T-cell (primary cell): ENCODE measurements at regions of chr14 and their contacts with region 1.

Region 1: DNA sequence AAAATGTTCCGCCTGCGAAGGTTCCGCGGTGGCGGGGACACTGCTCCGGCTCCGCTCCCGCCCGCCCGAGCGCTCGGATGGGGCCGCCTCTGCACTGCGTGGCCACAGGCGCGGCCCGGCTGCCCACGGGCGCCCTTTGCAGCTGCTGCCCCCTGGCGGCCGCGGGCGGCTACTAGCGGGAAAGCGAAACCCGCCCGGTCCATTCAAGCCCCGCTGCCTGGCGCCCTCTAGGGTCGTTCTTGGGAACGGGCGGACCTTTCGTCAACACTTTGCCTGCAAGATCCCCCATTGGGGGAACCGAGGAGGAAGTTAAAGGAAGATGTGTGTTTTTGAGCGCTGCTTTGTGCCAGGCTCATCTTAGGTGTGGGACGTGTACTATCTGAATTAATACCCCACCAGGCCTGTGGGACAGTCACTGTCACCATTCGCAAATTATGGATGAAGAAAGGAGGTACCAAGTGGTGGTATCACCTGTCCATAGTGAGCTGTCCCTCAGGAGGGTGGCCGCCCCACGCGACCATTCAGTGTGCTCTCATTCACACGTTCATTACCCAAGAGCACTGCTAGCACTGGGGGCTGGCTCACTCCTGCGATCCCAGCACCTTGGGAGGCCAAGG is 19.4 kb downstream of the GPR132 start:
- DNase-seq: peak; percentile 76 to 96 (median 91)
- ATAC-seq: peak; percentile 77 to 94 (median 88)
- H3K4me3 ChIP-seq: no peak overlapping the region
- H3K4me3 Mint-ChIP-seq: no peak overlapping the region
- H3K27ac ChIP-seq: no peak overlapping the region
- H3K27ac Mint-ChIP-seq: peak overlapping the region; percentile 17 to 66
- H3K4me1 ChIP-seq: peaks cover 4 to 18% of the 10 kb centered on the region in 2 experiments
- H3K4me1 Mint-ChIP-seq: peaks cover 12 to 17% (median 13%) of the 10 kb centered on the region in 3 donors
- H3K27me3 ChIP-seq: peaks cover 0 to 18% of the 10 kb centered on the region in 2 experiments
- H3K27me3 Mint-ChIP-seq: peaks cover 0 to 3% of the 10 kb centered on the region in 2 donors

Region 2: GRCh38 chr14:103730490-103731035 is 1315.3 kb before region 1 on chr14:
- CTCF ChIA-PET with region 1: no interaction called
- POLR2A ChIA-PET with region 1: no interaction called
- DNase-seq: no peak
- ATAC-seq: no peak
- H3K4me3 ChIP-seq: no peak overlapping the region
- H3K4me3 Mint-ChIP-seq: no peak overlapping the region
- H3K27ac ChIP-seq: no peak overlapping the region
- H3K27ac Mint-ChIP-seq: no peak overlapping the region
- H3K4me1 ChIP-seq: no peaks in the 10 kb centered on the region
- H3K4me1 Mint-ChIP-seq: no peaks in the 10 kb centered on the region
- H3K27me3 ChIP-seq: no peaks in the 10 kb centered on the region
- H3K27me3 Mint-ChIP-seq: no peaks in the 10 kb centered on the region

Region 3: GRCh38 chr14:104976198-104977007 is 69.4 kb before region 1 on chr14:
- CTCF ChIA-PET with region 1: interaction called, 9 to 24 read pairs
- POLR2A ChIA-PET with region 1: no interaction called
- DNase-seq: peak; percentile 59 to 92 (median 82)
- ATAC-seq: peak; percentile 72 to 80 (median 78)
- H3K4me3 ChIP-seq: no peak overlapping the region
- H3K4me3 Mint-ChIP-seq: peak overlapping the region; percentile 43 to 72 (median 70)
- H3K27ac ChIP-seq: no peak overlapping the region
- H3K27ac Mint-ChIP-seq: peak overlapping the region in 1 of 2 donors; percentile 89
- H3K4me1 ChIP-seq: peaks cover 0 to 30% of the 10 kb centered on the region in 2 experiments
- H3K4me1 Mint-ChIP-seq: peaks cover 10 to 16% (median 13%) of the 10 kb centered on the region in 3 donors
- H3K27me3 ChIP-seq: peaks cover 0 to 62% of the 10 kb centered on the region in 2 experiments
- H3K27me3 Mint-ChIP-seq: peaks cover 14 to 20% of the 10 kb centered on the region in 2 donors

Region 4: DNA sequence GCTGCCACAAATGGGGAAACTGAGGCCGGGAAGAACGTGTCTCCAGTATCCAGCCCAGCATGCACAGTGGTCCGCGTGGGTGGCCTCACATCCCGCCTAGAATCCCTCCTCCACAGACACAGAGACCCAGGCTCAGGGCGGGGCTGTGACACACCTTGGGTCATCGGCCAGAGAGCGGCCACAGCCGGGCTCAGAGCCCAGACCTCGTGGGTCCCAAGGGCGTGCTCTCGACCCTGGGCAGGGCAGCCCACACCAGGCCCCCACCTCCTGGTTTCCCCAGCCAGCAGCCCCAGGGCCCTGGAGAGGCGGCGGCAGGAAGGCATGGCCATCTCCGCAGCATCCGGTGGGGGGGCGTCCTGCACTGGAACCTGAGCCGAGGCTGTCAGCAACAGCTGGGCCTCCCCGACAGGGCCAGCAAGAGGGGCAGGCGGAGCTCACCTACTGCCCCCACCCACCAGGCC is 107.5 kb after region 1 on chr14:
- CTCF ChIA-PET with region 1: no interaction called
- POLR2A ChIA-PET with region 1: no interaction called
- DNase-seq: no peak
- ATAC-seq: peak in 1 of 4 experiments; percentile 9
- H3K4me3 ChIP-seq: no peak overlapping the region
- H3K4me3 Mint-ChIP-seq: no peak overlapping the region
- H3K27ac ChIP-seq: no peak overlapping the region
- H3K27ac Mint-ChIP-seq: no peak overlapping the region
- H3K4me1 ChIP-seq: no peaks in the 10 kb centered on the region
- H3K4me1 Mint-ChIP-seq: no peaks in the 10 kb centered on the region
- H3K27me3 ChIP-seq: peaks cover 0 to 10% of the 10 kb centered on the region in 2 experiments
- H3K27me3 Mint-ChIP-seq: no peaks in the 10 kb centered on the region

Region 5: DNA sequence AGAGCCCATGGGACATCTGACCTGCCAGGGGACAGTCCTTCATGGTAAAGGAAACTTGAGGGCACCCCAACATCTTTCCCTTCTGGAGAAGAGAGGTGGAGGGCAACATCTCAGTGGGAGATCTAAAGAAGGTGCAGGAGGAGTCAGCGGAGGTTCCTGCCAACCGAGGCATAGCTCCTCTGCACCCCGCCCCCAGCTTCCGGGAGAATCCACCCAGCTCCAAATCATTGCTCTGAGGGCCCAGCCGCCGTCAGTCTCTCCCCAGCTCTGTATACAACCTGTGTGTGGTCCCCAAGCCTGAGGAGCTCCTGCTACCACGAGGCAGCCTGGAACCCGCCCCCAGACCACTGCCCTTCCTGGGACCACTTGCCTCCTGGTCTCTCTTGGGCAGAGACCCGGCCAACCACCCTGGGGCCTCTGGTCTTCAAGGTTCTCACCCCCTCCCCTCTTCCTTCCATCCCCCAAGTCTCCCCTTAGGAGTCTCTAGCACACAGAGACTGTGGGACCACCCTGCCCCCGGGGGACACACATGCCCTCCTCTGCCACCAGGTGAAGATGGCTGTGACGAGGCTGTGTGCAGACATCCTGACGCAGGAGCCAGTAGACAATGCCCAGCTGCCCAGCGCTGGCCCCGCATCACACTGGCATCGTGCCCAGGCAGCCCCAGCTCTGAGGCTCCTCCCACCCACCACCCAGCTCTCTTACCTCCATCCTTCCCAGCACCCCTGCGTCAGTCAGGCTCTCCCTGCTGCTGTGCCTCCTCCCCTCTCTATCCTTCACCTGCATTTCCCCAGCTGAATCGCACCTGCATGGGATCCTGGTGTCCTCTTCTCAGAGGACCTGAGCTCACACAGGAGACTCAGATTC is 148.3 kb after region 1 on chr14:
- CTCF ChIA-PET with region 1: interaction called in 1 of 2 experiments, 10 read pairs
- POLR2A ChIA-PET with region 1: no interaction called
- DNase-seq: peak in 23 of 35 experiments; percentile 20 to 55 (median 38)
- ATAC-seq: peak; percentile 30 to 62 (median 48)
- H3K4me3 ChIP-seq: peak overlapping the region in 1 of 2 donors; percentile 32
- H3K4me3 Mint-ChIP-seq: peak overlapping the region in 2 of 3 donors; percentile 28 to 49
- H3K27ac ChIP-seq: no peak overlapping the region
- H3K27ac Mint-ChIP-seq: peak overlapping the region in 1 of 2 donors; percentile 74
- H3K4me1 ChIP-seq: peaks cover 31 to 52% of the 10 kb centered on the region in 2 experiments
- H3K4me1 Mint-ChIP-seq: peaks cover 18 to 34% (median 24%) of the 10 kb centered on the region in 3 donors
- H3K27me3 ChIP-seq: peaks cover 4 to 75% of the 10 kb centered on the region in 2 experiments
- H3K27me3 Mint-ChIP-seq: peaks cover 11 to 28% of the 10 kb centered on the region in 2 donors